Stomach (tissue), 19 donors: ENCODE measurements at regions of chr18 and their contacts with region 1.

Region 1: GRCh38 chr18:49041435-49042245 is 90.9 kb upstream of the SMAD7 start:
- DNase-seq: peak; percentile 70 to 82
- H3K4me3 ChIP-seq: no peak overlapping the region
- H3K27ac ChIP-seq: no peak overlapping the region
- H3K4me1 ChIP-seq: no peaks in the 10 kb centered on the region
- H3K27me3 ChIP-seq: no peaks in the 10 kb centered on the region
- CTCF ChIP-seq: peak in 5 of 7 experiments; percentile 48 to 64 (median 63)
- EP300 ChIP-seq: no peak
- POLR2A ChIP-seq: no peak

Region 2: DNA sequence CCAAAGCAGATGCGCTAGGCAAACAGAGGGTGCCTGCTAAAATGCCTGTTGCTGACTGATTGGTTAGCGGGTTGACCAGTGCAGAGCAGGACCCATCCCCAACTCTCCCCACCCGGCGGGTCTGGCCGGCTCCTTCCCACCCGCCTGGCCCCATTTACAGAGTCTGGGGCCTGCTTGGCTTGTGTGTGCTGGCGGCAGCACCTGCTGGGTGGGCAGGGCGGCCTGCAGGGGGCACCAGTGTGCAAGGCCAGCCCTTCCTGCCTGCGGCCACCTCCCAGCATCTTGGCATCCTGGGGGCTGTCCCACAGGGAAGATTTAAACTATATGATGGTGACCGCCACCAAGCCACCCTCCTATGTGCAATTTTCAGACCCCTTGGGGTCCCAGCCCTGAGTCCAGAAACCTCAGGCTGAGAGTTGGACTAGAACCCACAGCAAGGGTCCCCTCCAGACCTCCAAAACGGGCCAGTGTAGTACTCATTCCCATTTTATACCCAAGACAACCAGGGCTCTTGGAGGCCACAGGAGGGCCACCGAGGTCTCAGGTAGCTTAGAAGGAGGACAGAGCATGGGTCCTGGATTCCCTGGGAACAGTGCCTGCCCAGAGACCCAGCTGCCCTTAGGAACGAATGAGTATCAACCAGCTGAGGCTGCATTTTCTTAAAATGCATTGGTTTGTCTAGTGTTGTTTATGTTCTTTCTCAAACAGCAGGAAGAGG is 264.5 kb before region 1 on chr18:
- intact Hi-C with region 1: loop called (anchors 10 kb)
- DNase-seq: peak; percentile 71 to 88
- H3K4me3 ChIP-seq: no peak overlapping the region
- H3K27ac ChIP-seq: peak overlapping the region in 4 of 5 donors; percentile 26 to 45 (median 33)
- H3K4me1 ChIP-seq: peaks cover 23 to 56% (median 44%) of the 10 kb centered on the region in 4 donors
- H3K27me3 ChIP-seq: no peaks in the 10 kb centered on the region
- CTCF ChIP-seq: peak in 5 of 7 experiments; percentile 53 to 88 (median 82)
- EP300 ChIP-seq: no peak
- POLR2A ChIP-seq: no peak

Region 3: GRCh38 chr18:49582579-49582978 is 540.9 kb after region 1 on chr18:
- intact Hi-C with region 1: no loop called
- DNase-seq: peak in 1 of 2 donors; percentile 50
- H3K4me3 ChIP-seq: no peak overlapping the region
- H3K27ac ChIP-seq: no peak overlapping the region
- H3K4me1 ChIP-seq: peaks cover 0 to 7% (median 0%) of the 10 kb centered on the region in 4 donors
- H3K27me3 ChIP-seq: no peaks in the 10 kb centered on the region
- CTCF ChIP-seq: no peak
- EP300 ChIP-seq: no peak
- POLR2A ChIP-seq: no peak